ENCODE measurements at regions of chr10 and their contacts with region 1.

Region 1: GRCh38 chr10:74244097-74244685 is 93.2 kb downstream of the ADK start:
- DNase-seq: peak; percentile 63
- H3K4me3 ChIP-seq: no peak overlapping the region
- H3K27ac ChIP-seq: no peak overlapping the region
- H3K4me1 ChIP-seq: no peaks in the 10 kb centered on the region
- CTCF ChIP-seq: peak; percentile 95

Region 2: GRCh38 chr10:73467206-73467605 is 777.0 kb before region 1 on chr10:
- CTCF ChIA-PET with region 1: no interaction called
- POLR2A ChIA-PET with region 1: no interaction called
- intact Hi-C with region 1: no loop called
- DNase-seq: no peak
- H3K4me3 ChIP-seq: no peak overlapping the region
- H3K27ac ChIP-seq: no peak overlapping the region
- H3K4me1 ChIP-seq: no peaks in the 10 kb centered on the region
- CTCF ChIP-seq: no peak

Region 3: DNA sequence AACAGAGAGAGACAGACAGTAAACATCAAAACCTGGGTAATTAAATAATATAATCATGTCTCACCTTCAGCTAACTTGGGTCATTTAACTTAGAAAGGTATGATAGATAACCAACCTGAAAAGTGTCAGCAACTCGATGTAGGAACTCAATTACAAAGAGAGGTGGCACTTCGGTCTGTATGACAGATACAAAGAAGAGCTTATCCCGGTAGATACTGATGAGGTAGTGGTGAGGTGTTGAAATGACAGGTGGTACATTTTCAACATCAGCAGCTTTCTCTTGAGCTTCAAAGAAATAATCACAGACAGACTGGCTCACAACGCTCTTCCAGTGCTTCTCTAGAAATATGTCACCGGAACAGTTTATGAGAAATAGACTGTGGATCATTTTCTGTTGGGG is 106.2 kb before region 1 on chr10:
- CTCF ChIA-PET with region 1: no interaction called
- POLR2A ChIA-PET with region 1: interaction called, 10 read pairs
- intact Hi-C with region 1: no loop called
- DNase-seq: no peak
- H3K4me3 ChIP-seq: no peak overlapping the region
- H3K27ac ChIP-seq: no peak overlapping the region
- H3K4me1 ChIP-seq: no peaks in the 10 kb centered on the region
- CTCF ChIP-seq: no peak

Region 4: DNA sequence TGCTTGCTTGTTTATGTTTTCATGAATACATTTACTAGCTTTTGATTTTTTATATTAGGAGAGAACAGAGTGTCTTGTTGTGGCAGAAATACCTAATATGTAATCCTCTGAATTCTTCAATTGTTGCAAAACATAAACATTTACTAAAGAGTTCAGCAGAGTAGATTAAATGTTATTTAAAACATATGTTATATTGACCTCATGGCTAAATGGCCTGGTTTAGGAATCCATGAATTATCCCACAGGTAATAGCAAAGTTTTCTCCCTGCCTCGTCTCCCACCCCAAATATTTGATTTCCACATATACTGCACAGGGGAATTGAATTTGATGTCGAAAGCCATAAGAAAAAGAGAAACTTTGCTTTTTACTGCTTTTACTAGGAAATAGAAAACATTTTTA is 18.7 kb after region 1 on chr10:
- CTCF ChIA-PET with region 1: no interaction called
- POLR2A ChIA-PET with region 1: interaction called, 10 read pairs
- intact Hi-C with region 1: no loop called
- DNase-seq: no peak
- H3K4me3 ChIP-seq: no peak overlapping the region
- H3K27ac ChIP-seq: no peak overlapping the region
- H3K4me1 ChIP-seq: no peaks in the 10 kb centered on the region
- CTCF ChIP-seq: no peak

Region 5: DNA sequence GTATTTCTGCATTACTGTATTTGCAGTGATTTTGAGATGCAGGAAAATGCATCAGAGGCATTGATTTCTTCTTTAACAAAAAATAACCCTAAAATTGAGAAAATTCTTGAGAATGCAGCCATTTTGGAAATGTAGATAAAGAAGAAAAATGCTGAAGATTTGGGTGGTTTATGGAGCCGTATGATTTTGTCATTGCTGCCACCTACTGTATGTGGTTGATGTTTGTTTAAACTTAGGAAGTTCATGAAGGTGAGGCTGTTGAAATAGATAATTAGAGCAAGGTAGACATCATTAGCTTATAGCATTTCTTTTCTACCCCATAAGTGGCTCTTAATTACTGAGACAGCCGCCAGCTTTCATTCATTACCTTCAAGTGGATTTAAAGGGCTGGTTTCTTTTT is 775.2 kb after region 1 on chr10:
- CTCF ChIA-PET with region 1: no interaction called
- POLR2A ChIA-PET with region 1: no interaction called
- intact Hi-C with region 1: loop called (anchors 5 kb)
- DNase-seq: peak; percentile 48
- H3K4me3 ChIP-seq: no peak overlapping the region
- H3K27ac ChIP-seq: no peak overlapping the region
- H3K4me1 ChIP-seq: no peaks in the 10 kb centered on the region
- CTCF ChIP-seq: peak; percentile 82

Region 6: DNA sequence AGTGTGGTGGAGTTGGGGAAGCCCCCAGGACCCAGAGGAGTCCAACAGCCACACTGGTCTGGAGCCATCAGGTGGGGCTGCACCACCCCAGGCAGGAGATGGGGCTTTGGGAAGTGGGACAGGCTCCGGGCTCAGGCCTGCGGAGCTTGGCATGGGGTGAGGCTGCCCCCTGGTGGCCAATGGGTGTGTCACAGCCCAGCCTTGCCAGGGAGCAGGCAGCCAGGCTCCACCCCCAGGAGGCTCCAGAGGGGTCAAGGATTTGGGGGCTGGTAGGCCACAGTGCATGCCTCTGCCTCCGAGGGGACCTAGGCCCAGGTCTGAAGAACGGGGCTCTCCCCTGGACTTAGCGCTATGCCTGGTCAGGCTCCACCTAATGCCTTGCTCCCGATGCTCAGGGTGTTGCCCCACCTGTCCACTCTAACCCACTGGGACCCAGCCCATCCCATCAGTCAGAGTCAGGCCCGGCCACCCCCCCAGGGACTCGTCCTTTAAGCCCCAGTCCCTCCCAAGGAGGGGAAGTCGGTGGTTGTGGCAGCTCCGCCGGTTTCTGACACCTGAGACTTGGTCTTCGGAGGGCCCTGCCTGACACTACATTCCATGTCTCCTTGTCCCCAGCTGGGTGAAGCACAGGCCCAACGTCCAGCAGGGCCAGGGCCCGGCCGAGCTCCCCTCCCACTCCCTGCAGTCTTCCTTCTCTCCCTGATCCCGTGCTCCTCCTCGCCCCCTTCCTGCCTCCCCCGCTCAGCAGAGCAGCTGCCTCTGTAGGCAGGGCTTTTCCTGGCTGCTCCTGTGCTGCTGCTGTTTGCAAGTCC is 856.0 kb after region 1 on chr10:
- CTCF ChIA-PET with region 1: no interaction called
- POLR2A ChIA-PET with region 1: no interaction called
- intact Hi-C with region 1: loop called (anchors 2 kb)
- DNase-seq: peak; percentile 70
- H3K4me3 ChIP-seq: no peak overlapping the region
- H3K27ac ChIP-seq: no peak overlapping the region
- H3K4me1 ChIP-seq: no peaks in the 10 kb centered on the region
- CTCF ChIP-seq: peak; percentile 92

Region 7: DNA sequence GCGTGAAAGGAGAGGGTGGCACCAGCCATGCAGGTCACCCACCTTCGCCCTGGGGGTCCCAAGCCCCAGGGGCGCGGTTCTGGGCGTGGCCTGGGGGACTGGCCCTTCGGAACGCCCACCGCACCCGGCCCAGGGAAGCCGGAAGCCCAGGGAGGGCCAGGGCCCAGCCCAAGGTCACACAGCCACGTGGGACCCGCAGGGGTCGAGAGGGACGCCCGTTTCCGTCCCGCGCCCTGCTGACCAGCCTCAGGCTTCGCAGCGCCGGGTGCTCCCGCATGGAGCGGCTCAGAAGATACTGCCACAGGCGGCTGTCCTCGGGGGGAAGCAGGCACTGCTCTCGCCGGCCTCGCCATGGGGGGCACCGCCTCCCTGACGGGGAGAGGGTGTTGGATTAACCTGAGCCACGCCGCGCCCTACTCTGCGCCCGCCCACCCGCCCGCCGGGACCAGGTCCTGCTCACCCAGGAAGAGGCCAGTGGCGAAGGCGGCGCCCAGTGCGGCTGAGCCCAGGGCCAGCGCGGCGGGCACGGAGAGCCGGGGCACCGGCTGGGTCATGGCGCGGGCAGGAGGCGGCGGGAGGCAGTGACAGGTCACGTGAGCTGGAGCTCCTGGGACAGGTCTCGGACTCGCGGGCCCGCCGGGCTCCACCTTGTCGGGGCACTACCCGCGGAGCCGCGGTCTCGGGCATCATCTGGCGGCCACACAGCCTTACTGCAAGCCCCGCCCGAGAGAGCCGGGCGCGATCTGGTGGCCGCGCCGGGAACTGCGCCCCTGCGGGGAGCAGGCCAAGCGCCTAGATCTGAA is 991.4 kb after region 1 on chr10 and contains the start of gene COMTD1:
- CTCF ChIA-PET with region 1: no interaction called
- POLR2A ChIA-PET with region 1: no interaction called
- intact Hi-C with region 1: loop called (anchors 5 kb)
- DNase-seq: peak; percentile 95
- H3K4me3 ChIP-seq: peak within 1 kb of the TSS; percentile 80
- H3K27ac ChIP-seq: peak within 1 kb of the TSS; percentile 77
- H3K4me1 ChIP-seq: peaks cover 19% of the 10 kb centered on the region
- CTCF ChIP-seq: peak; percentile 99
- total RNA-seq, gene COMTD1: 20.7 and 37.7 TPM in 2 replicates

Measured in OCI-LY7 (cell line).